AG04450 (cell line): ENCODE measurements at regions of chrX and their contacts with region 1.

Region 1: DNA sequence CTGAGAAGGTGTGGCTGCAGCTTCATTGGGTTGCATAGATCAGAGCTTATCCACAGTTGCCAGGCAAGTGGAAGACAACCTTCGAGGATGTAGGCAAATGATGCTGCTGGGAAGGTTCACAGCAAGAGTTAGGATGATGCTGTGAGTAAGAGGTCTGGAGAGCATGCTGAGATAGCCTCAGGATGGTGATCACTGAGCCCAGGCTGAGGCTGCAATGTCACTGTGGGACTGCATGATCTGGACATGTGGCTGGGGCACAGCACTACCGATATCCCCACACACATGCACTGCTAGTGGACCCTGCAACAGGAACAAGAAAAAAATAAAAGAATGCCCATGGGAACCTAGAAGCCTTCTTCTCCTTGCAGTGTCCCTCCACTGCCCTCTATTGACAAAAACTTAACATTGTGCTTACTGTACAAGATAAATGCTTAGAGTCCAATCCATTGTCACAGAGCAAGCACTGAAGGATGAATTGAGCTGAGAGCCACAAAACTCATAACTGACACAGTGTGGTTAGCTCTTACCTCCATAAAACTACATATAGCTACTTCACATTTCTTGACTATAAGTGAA is 105.6 kb downstream of the CNKSR2 start:
- DNase-seq: peak; percentile 11
- H3K4me3 ChIP-seq: no peak overlapping the region
- H3K27ac ChIP-seq: no peak overlapping the region
- H3K27me3 ChIP-seq: no peaks in the 10 kb centered on the region
- CTCF ChIP-seq: peak; percentile 70

Region 2: DNA sequence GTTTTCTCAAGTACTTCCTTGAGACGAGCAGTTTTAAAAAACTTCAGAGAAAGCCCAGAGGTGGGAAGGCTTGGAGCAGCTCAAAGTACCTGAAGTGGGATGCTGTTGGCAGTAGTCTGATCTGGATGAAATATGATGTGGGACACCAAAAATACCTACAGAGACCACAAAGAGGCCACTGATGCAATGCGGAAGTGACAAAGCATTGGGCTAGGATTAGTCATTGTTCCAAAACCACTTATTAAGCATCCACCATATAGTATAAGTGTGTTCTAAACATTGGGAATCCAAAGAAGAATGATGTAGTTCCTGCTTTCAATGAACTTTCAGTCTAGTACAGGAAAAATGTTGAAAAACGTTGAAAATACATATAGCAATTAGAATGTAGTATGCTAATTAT is 491.7 kb before region 1 on chrX:
- CTCF ChIA-PET with region 1: no interaction called
- POLR2A ChIA-PET with region 1: no interaction called
- DNase-seq: no peak
- H3K4me3 ChIP-seq: no peak overlapping the region
- H3K27ac ChIP-seq: no peak overlapping the region
- H3K27me3 ChIP-seq: no peaks in the 10 kb centered on the region
- CTCF ChIP-seq: no peak

Region 3: DNA sequence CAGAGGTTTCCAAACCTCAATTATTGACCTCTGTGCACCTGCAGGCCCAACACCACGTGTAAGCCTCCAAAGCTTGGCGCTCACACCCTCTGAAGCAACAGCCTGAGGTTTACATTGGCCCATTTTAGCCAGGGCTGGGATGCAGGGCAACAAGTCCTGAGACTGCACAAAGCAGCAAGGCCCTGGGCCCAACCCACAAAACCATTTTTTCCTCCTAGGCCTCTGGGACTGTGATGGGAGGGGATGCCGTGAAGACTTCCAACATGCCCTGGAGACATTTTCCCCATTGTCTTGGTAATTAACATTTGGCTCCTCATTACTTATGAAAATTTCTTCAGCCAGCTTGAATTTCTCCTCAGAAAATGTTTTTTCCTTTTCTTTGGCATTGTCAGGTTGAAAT is 160.5 kb before region 1 on chrX:
- CTCF ChIA-PET with region 1: no interaction called
- POLR2A ChIA-PET with region 1: no interaction called
- DNase-seq: no peak
- H3K4me3 ChIP-seq: no peak overlapping the region
- H3K27ac ChIP-seq: no peak overlapping the region
- H3K27me3 ChIP-seq: no peaks in the 10 kb centered on the region
- CTCF ChIP-seq: no peak

Region 4: GRCh38 chrX:21493226-21493830 is 13.5 kb after region 1 on chrX:
- CTCF ChIA-PET with region 1: interaction called, 15 read pairs
- POLR2A ChIA-PET with region 1: no interaction called
- DNase-seq: no peak
- H3K4me3 ChIP-seq: no peak overlapping the region
- H3K27ac ChIP-seq: no peak overlapping the region
- H3K27me3 ChIP-seq: no peaks in the 10 kb centered on the region
- CTCF ChIP-seq: no peak

Region 5: GRCh38 chrX:21503593-21503992 is 23.8 kb after region 1 on chrX:
- CTCF ChIA-PET with region 1: interaction called, 10 read pairs
- POLR2A ChIA-PET with region 1: no interaction called
- DNase-seq: no peak
- H3K4me3 ChIP-seq: no peak overlapping the region
- H3K27ac ChIP-seq: no peak overlapping the region
- H3K27me3 ChIP-seq: no peaks in the 10 kb centered on the region
- CTCF ChIP-seq: no peak

Region 6: DNA sequence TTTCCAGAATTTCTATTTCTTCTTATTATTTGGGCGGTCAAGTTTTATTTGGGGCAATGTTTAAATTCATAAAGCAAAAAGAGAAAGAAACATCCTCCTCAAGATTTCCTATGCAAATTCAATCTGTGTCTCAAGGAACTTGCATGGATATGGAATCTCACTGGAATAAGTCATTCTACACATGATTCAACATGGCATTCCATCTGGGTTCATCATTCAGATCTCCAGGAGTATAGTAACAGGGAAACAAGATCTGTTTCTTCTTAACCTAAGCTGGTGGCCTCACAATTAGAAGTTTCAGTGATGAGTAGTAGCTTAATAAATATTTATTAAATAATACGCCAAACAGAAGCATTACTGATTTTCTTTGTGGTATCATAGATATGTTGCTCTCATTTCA is 158.5 kb after region 1 on chrX:
- CTCF ChIA-PET with region 1: no interaction called
- POLR2A ChIA-PET with region 1: no interaction called
- DNase-seq: peak; percentile 44
- H3K4me3 ChIP-seq: no peak overlapping the region
- H3K27ac ChIP-seq: no peak overlapping the region
- H3K27me3 ChIP-seq: no peaks in the 10 kb centered on the region
- CTCF ChIP-seq: no peak